ENCODE measurements at regions of chr7 and their contacts with region 1.

Region 1: DNA sequence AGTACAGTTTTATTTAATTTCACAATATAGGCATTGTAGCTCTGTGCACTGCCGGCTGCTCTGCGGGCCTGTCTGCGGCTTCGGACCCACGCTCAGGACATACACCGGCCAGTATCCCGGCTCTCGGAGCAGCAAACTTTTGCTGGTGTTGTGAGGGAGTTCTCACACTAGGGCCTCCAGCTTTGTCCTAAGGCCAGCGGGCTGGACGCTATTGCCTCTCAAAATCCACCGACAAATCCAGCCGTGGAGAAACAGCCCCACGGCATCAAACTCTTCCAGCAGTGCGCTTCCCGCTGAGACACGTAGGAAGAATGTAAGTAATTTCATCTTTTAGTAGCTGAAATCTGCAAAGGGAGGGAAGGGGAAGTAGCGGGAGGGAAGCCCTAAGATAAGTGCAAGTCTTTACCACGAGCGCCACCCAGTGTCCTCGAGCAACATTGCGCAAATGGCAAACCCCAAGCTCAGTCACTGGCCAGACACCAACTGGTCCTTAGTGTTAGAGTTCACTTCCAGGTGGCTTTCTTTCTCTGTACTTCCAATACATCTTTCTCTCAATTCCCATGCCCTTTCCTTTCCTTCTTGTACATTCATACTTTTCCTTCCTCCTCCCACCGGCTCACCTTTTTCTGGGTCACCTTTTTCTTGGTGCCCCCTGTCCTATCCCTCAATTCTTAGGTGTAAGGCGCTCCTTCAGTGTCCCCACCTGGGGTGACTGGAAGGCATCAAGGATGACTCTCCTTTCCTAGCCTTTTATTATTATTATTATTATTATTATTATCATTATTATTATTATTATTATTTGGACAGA is 3.0 kb upstream of the DLX5 start:
- DNase-seq: peak; percentile 59 to 82
- ATAC-seq: peak; percentile 78 to 90 (median 88)
- H3K4me3 ChIP-seq: peak overlapping the region; percentile 8
- H3K4me3 Mint-ChIP-seq: peak overlapping the region; percentile 89
- H3K27ac ChIP-seq: no peak overlapping the region
- H3K27ac Mint-ChIP-seq: no peak overlapping the region
- H3K4me1 ChIP-seq: peaks cover 27% of the 10 kb centered on the region
- H3K4me1 Mint-ChIP-seq: peaks cover 32 to 40% of the 10 kb centered on the region in 2 donors
- H3K27me3 ChIP-seq: peaks cover 28% of the 10 kb centered on the region
- H3K27me3 Mint-ChIP-seq: peaks cover 56 to 80% of the 10 kb centered on the region in 2 donors
- CTCF ChIP-seq: peak; percentile 84

Region 2: GRCh38 chr7:95916573-95917297 is 1110.9 kb before region 1 on chr7:
- intact Hi-C with region 1: loop called (anchors 1 kb)
- DNase-seq: peak; percentile 60 to 78
- ATAC-seq: peak; percentile 36 to 76 (median 65)
- H3K4me3 ChIP-seq: no peak overlapping the region
- H3K4me3 Mint-ChIP-seq: peak overlapping the region; percentile 67
- H3K27ac ChIP-seq: no peak overlapping the region
- H3K27ac Mint-ChIP-seq: no peak overlapping the region
- H3K4me1 ChIP-seq: no peaks in the 10 kb centered on the region
- H3K4me1 Mint-ChIP-seq: peaks cover 11 to 14% of the 10 kb centered on the region in 2 donors
- H3K27me3 ChIP-seq: no peaks in the 10 kb centered on the region
- H3K27me3 Mint-ChIP-seq: peaks cover 6% of the 10 kb centered on the region in 2 donors
- CTCF ChIP-seq: peak; percentile 97

Region 3: GRCh38 chr7:96075510-96076349 is 951.9 kb before region 1 on chr7:
- intact Hi-C with region 1: loop called (anchors 1 kb)
- DNase-seq: peak; percentile 26 to 66
- ATAC-seq: peak; percentile 76 to 94 (median 77)
- H3K4me3 ChIP-seq: peak overlapping the region; percentile 19
- H3K4me3 Mint-ChIP-seq: peak overlapping the region; percentile 82
- H3K27ac ChIP-seq: no peak overlapping the region
- H3K27ac Mint-ChIP-seq: no peak overlapping the region
- H3K4me1 ChIP-seq: peaks cover 10% of the 10 kb centered on the region
- H3K4me1 Mint-ChIP-seq: peaks cover 10 to 11% of the 10 kb centered on the region in 2 donors
- H3K27me3 ChIP-seq: peaks cover 16% of the 10 kb centered on the region
- H3K27me3 Mint-ChIP-seq: peaks cover 23 to 44% of the 10 kb centered on the region in 2 donors
- CTCF ChIP-seq: peak; percentile 68

Region 4: DNA sequence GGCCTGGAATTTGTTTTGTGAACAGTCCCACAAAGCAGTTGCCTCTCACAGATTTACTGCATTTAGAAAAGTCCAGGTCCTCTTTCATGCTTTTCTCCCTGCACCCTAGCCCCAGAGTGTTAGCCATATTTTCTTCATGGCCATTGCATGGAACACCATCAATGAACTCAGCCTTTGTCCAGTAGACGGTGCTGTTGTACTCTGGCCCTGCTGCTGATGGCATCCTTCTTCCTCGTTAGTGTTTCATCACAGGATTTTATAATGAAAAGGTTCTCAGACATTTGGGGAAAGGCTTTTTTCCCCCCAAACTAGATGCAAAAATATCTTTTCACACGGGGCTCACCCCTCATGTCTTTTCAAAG is 612.7 kb before region 1 on chr7:
- intact Hi-C with region 1: loop called (anchors 1 kb)
- DNase-seq: peak in 1 of 2 donors; percentile 61
- ATAC-seq: peak in 1 of 3 donors; percentile 72
- H3K4me3 ChIP-seq: no peak overlapping the region
- H3K4me3 Mint-ChIP-seq: no peak overlapping the region
- H3K27ac ChIP-seq: no peak overlapping the region
- H3K27ac Mint-ChIP-seq: no peak overlapping the region
- H3K4me1 ChIP-seq: no peaks in the 10 kb centered on the region
- H3K4me1 Mint-ChIP-seq: peaks cover 0 to 4% of the 10 kb centered on the region in 2 donors
- H3K27me3 ChIP-seq: no peaks in the 10 kb centered on the region
- H3K27me3 Mint-ChIP-seq: peaks cover 10 to 15% of the 10 kb centered on the region in 2 donors
- CTCF ChIP-seq: peak; percentile 34

Region 5: DNA sequence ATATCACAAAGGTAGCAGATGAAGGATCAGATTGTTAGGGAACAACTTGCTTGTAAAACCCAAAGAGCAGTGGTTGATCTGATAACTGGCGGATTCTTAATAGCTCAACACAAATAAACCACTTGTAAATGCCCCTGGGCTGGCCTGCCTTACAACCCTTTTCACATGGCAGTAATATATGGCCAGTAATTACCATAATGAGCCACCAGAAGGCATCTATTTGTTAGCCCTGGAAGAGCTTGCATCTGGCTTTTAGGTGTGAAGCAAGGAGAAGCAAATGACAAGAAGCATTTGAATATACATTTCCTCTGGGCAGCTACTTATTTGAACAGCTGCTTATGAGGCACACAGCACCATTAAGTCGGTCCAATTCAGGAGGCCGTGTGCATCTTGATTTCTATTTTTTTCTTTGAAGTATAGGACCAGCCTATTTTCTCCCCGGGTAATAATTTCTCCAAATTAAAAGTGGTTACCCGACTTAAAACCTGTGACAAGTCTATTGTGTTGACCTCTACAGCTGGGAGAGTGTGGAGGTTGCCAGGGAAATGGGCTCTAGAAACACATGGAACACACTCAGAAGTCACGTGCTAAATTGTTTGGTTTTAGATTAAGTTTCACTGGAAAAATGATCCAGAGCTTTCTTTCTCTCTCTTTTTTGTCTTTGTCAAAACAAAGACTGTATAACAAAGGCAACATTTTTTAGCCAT is 431.4 kb before region 1 on chr7:
- intact Hi-C with region 1: loop called (anchors 5 kb)
- DNase-seq: peak in 1 of 2 donors; percentile 7
- ATAC-seq: no peak
- H3K4me3 ChIP-seq: no peak overlapping the region
- H3K4me3 Mint-ChIP-seq: no peak overlapping the region
- H3K27ac ChIP-seq: no peak overlapping the region
- H3K27ac Mint-ChIP-seq: no peak overlapping the region
- H3K4me1 ChIP-seq: no peaks in the 10 kb centered on the region
- H3K4me1 Mint-ChIP-seq: no peaks in the 10 kb centered on the region
- H3K27me3 ChIP-seq: no peaks in the 10 kb centered on the region
- H3K27me3 Mint-ChIP-seq: peaks cover 16 to 36% of the 10 kb centered on the region in 2 donors
- CTCF ChIP-seq: no peak

Region 6: GRCh38 chr7:97043281-97043680 is 15.7 kb after region 1 on chr7:
- intact Hi-C with region 1: no loop called
- DNase-seq: no peak
- ATAC-seq: no peak
- H3K4me3 ChIP-seq: no peak overlapping the region
- H3K4me3 Mint-ChIP-seq: no peak overlapping the region
- H3K27ac ChIP-seq: no peak overlapping the region
- H3K27ac Mint-ChIP-seq: no peak overlapping the region
- H3K4me1 ChIP-seq: no peaks in the 10 kb centered on the region
- H3K4me1 Mint-ChIP-seq: no peaks in the 10 kb centered on the region
- H3K27me3 ChIP-seq: peaks cover 10% of the 10 kb centered on the region
- H3K27me3 Mint-ChIP-seq: peaks cover 15 to 65% of the 10 kb centered on the region in 2 donors
- CTCF ChIP-seq: no peak